ENCODE measurements at regions of chr12 and their contacts with region 1.

Region 1: DNA sequence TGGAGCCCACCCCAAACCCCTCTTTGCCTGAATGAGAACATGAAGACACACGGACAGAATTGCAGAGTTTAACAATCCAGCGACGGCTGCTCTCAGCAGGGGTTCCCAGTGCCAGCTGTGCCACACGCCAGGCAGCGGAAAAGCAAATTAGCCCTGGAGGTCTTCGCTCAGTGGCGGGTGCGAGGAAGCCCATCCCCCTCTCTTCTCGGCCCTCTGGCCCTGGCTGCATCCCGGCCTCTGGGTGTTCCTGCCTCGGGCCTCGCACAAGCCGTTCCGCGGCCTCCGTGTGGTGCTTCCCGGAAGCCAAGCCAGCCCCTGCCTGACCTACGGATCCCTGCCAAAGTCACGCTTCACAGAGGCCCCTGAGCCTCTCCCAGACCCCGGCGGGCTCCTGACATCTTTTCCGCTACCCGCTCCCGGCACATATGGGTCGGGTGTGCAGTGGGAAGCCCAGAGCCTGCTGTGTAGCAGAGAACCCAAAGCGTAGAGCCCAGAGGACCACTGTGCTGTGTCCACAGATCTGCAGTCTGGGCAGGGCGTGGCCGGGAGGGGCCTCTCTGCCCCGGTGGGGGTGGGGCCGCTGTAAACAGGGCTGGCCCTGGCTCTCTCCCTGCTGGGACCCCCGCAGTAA is 70.7 kb upstream of the GALNT9 start:
- DNase-seq: peak in 3 of 6 donors; percentile 24 to 60 (median 56)
- ATAC-seq: no peak
- H3K4me3 ChIP-seq: no peak overlapping the region
- H3K27ac ChIP-seq: no peak overlapping the region
- H3K4me1 ChIP-seq: no peaks in the 10 kb centered on the region
- H3K27me3 ChIP-seq: peaks cover 0 to 9% (median 0%) of the 10 kb centered on the region in 4 donors
- CTCF ChIP-seq: no peak

Region 2: DNA sequence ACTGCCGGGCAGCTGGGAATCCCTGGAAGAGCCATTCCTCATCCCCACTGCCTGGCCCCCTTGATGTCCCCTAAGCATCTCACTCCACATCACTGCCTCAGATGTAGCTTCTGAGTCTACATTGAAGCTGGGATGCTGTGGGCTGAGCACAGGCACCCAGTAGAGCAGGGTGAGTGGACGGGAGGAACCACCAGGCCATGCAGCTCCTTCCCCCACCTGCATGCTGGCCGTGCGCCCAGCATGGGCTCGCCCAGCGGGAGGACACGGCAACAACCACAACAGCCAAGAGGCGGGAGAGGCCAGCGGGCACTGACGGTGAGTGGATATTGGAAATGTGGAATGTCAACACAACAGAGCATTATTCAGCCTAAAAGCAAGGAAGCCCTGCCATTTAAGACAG is 1135.5 kb before region 1 on chr12:
- intact Hi-C with region 1: no loop called
- DNase-seq: peak in 3 of 6 donors; percentile 36 to 58 (median 38)
- ATAC-seq: peak; percentile 53 to 84 (median 72)
- H3K4me3 ChIP-seq: no peak overlapping the region
- H3K27ac ChIP-seq: no peak overlapping the region
- H3K4me1 ChIP-seq: no peaks in the 10 kb centered on the region
- H3K27me3 ChIP-seq: no peaks in the 10 kb centered on the region
- CTCF ChIP-seq: no peak

Region 3: DNA sequence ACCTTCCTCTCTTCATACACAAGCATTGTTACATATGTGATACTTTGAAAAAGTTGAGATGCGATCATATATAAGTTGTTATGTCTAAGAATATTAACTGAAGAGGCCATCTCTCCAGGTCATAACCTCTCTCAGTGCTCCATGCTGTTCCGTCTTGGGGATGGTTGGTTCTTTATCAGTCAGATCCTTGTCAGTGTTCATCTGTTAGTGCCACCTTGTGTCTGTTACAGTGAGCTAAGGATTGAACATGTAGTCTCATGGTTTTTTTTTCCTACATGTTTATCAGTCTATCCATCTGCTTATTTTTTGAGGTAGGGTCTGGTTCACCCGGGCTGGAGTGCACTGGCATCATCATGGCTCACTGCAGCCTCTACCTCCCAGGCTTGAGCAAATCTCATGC is 419.9 kb before region 1 on chr12:
- intact Hi-C with region 1: no loop called
- DNase-seq: no peak
- ATAC-seq: no peak
- H3K4me3 ChIP-seq: no peak overlapping the region
- H3K27ac ChIP-seq: no peak overlapping the region
- H3K4me1 ChIP-seq: no peaks in the 10 kb centered on the region
- H3K27me3 ChIP-seq: no peaks in the 10 kb centered on the region
- CTCF ChIP-seq: no peak

Region 4: GRCh38 chr12:132538336-132538990 is 138.3 kb after region 1 on chr12:
- intact Hi-C with region 1: loop called in 1 of 3 experiments (anchors 10 kb)
- DNase-seq: no peak
- ATAC-seq: no peak
- H3K4me3 ChIP-seq: no peak overlapping the region
- H3K27ac ChIP-seq: no peak overlapping the region
- H3K4me1 ChIP-seq: no peaks in the 10 kb centered on the region
- H3K27me3 ChIP-seq: no peaks in the 10 kb centered on the region
- CTCF ChIP-seq: no peak

Region 5: DNA sequence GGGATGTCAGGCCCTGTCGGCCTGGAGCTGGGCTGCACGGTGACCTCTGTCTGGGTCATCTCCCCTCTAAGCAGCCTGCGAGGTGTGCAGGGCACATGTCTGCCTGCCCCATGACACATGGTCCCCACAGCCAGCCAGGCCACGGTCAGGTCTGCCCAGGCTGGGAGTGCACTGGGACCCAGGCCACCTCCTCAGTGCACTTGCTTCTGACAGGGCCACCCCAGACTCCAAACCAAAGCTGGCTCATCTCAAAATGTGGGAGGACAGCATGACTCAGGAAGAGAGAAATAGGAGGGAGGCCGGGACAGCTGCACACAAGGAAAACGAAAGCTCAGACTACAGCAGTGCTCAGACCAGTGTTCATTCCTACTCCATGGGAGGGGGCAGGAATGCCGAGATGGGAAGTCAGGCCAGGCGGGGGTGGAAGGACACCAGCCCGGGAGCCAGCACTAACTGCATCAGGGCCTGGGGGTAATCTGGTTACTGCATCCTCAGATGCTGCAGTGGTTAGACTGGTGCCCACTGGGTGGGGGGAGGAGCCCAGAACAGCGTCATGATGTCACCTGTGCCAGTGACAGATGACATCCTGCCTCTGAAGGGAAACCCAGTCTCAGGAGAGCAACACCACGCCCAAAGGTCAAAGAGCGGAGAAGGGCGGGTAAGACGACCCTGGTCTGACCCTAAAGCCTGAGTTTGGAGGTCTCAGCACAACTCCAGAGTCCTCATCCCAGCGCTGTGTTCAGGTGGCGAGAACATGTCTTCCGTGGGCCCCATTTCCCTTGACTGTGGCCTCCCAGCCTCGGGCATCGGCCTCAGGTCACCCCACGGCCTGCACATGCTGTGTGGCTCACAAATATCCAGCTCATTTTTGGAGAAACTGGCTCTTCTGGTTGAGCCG is 222.6 kb after region 1 on chr12:
- intact Hi-C with region 1: loop called in 1 of 3 experiments (anchors 10 kb)
- DNase-seq: peak in 1 of 6 donors; percentile 57
- ATAC-seq: peak in 3 of 4 donors; percentile 28 to 52 (median 51)
- H3K4me3 ChIP-seq: no peak overlapping the region
- H3K27ac ChIP-seq: no peak overlapping the region
- H3K4me1 ChIP-seq: no peaks in the 10 kb centered on the region
- H3K27me3 ChIP-seq: peaks cover 0 to 9% (median 2%) of the 10 kb centered on the region in 4 donors
- CTCF ChIP-seq: no peak